Lower leg skin (tissue), 4 donors: ENCODE measurements at regions of chr4 and their contacts with region 1.

Region 1: GRCh38 chr4:25070545-25070944 is 39.8 kb upstream of the LGI2 start:
- DNase-seq: no peak
- H3K4me3 ChIP-seq: no peak overlapping the region
- CTCF ChIP-seq: no peak
- POLR2A ChIP-seq: no peak

Region 2: GRCh38 chr4:24443200-24443599 is 627.3 kb before region 1 on chr4:
- intact Hi-C with region 1: loop called (anchors 5 kb)
- DNase-seq: no peak
- H3K4me3 ChIP-seq: no peak overlapping the region
- CTCF ChIP-seq: no peak
- POLR2A ChIP-seq: no peak

Region 3: DNA sequence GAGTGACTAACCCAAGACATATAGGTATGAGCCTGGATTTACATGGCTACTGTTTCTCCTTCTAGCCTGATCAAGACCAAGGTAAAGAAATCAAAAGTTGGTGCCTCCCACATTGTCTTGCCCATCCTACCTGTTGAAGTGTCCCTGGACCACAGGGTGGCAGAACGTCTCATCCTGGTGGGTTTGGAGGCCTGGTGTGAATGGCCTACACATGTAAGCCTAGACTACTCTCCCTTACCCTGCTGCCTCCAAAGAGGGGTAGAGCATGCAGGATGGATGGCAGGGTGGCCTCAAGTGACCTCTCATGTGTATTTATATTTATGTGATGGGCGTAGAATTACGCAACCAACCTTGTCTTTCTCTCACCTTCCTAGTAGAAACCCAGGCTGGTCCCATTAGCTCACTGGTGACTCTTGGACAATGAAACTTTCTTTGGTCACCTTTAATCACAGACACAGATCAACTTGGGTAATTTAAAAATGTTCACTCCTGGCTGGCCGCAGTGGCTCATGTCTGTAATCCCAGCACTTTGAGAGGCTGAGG is 348.4 kb before region 1 on chr4:
- intact Hi-C with region 1: no loop called
- DNase-seq: no peak
- H3K4me3 ChIP-seq: no peak overlapping the region
- CTCF ChIP-seq: no peak
- POLR2A ChIP-seq: no peak